ENCODE measurements at regions of chr9 and their contacts with region 1.

Region 1: DNA sequence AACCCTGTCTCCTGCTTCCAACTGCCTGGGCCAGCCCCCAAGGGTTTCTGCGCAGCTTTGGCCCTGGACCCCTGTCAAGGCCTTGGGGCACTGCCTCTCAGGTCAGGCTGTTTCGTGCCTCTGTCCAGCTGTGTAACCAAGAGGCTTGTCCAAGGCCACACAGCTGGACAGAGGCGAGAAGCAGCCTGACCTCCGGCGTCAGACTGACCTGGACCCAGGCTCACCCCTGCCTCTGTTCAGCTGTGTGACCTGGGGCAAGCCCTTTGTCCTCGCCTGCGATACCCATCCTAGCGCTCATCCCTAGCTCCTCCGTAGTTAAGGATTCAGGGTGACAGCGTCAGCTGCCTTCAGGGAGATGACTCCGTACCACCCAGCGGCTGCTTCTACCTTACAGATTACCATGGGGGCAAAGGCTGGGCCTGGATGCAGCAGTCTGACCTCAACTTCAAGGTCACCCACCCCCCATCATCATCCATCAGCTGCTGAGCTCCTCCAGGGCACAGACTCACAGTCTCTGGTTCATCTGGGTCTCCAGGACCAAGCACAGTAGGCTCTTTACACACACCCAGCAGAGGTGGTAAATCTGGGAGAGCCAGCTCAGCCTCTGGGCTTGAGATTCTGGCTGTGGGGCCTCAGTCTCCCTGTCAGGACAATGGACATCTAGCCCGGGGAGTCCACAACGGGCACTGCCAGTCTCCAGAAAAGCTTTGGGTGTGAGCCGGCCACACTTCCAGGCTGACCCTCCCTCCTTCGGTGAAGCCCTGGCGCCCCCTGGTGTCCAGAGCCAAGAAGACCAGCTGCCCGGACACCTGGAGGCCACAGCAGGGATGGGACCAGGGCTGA is 7.9 kb downstream of the AK1 start:
- DNase-seq: peak; percentile 88
- ATAC-seq: peak; percentile 86
- H3K4me3 Mint-ChIP-seq: no peak overlapping the region
- H3K27ac Mint-ChIP-seq: no peak overlapping the region
- H3K4me1 Mint-ChIP-seq: peaks cover 15% of the 10 kb centered on the region
- H3K27me3 Mint-ChIP-seq: no peaks in the 10 kb centered on the region

Region 2: GRCh38 chr9:127568971-127569885 is 300.3 kb before region 1 on chr9:
- CTCF ChIA-PET with region 1: no interaction called
- DNase-seq: peak; percentile 88
- ATAC-seq: peak; percentile 85
- H3K4me3 Mint-ChIP-seq: peak overlapping the region; percentile 75
- H3K27ac Mint-ChIP-seq: peak overlapping the region; percentile 95
- H3K4me1 Mint-ChIP-seq: peaks cover 58% of the 10 kb centered on the region
- H3K27me3 Mint-ChIP-seq: no peaks in the 10 kb centered on the region

Region 3: GRCh38 chr9:127763918-127764384 is 105.6 kb before region 1 on chr9:
- CTCF ChIA-PET with region 1: interaction called, 20 read pairs
- DNase-seq: no peak
- ATAC-seq: peak; percentile 45
- H3K4me3 Mint-ChIP-seq: no peak overlapping the region
- H3K27ac Mint-ChIP-seq: peak overlapping the region; percentile 54
- H3K4me1 Mint-ChIP-seq: peaks cover 48% of the 10 kb centered on the region
- H3K27me3 Mint-ChIP-seq: no peaks in the 10 kb centered on the region

Region 4: DNA sequence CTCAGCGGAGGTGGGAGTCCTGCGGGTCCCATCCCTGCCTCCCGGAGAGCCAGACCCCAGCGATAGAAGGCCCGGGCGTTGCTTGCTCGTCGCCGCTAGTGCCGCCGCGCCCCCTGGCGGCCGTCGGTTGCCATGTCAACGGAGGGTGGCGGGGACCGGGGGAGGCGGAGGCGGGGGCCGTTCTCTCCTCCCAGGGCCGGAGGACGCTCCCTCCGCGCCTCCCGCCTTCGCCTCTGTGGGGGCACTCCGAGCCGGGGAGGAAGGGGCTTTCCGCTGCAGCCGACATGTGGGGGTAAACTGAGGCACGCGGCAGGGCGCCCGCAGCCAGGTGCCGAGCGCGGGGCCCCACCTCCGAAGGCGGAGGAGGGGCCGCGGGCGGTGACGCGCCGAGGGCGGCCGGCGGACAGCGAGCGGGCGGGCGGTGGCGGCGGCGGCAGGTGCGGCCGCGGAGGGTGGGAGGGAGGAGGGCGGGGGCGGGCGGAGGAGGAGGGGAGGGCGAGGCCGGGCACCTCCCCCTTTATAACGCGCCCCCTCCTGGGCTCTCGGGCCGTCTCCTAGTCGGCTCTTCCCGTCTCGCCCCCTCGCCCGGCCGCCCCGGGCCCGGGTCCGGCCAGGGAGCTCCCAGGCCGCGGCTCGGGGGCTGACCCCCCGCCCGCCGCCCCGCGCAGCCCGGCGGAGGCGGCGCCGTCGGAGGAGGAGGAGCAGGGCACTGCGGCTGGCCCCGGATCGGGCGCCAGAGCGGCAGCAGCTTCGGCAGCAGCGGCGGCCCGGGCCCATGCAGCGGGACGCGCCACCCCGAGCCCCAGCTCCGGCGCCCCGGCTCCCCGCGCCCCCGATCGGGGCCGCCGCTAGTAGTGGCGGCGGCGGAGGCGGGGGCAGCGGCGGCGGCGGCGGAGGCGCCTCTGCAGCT is 84.3 kb before region 1 on chr9:
- CTCF ChIA-PET with region 1: interaction called, 64 read pairs
- DNase-seq: peak; percentile 94
- ATAC-seq: peak; percentile 46
- H3K4me3 Mint-ChIP-seq: peak overlapping the region; percentile 95
- H3K27ac Mint-ChIP-seq: peak overlapping the region; percentile 89
- H3K4me1 Mint-ChIP-seq: peaks cover 78% of the 10 kb centered on the region
- H3K27me3 Mint-ChIP-seq: no peaks in the 10 kb centered on the region

Region 5: GRCh38 chr9:127817881-127818434 is 51.6 kb before region 1 on chr9:
- CTCF ChIA-PET with region 1: interaction called, 17 read pairs
- DNase-seq: no peak
- ATAC-seq: no peak
- H3K4me3 Mint-ChIP-seq: no peak overlapping the region
- H3K27ac Mint-ChIP-seq: no peak overlapping the region
- H3K4me1 Mint-ChIP-seq: no peaks in the 10 kb centered on the region
- H3K27me3 Mint-ChIP-seq: no peaks in the 10 kb centered on the region

Region 6: GRCh38 chr9:127910613-127911205 is 41.2 kb after region 1 on chr9:
- CTCF ChIA-PET with region 1: interaction called, 20 read pairs
- DNase-seq: peak; percentile 40
- ATAC-seq: no peak
- H3K4me3 Mint-ChIP-seq: peak overlapping the region; percentile 55
- H3K27ac Mint-ChIP-seq: peak overlapping the region; percentile 98
- H3K4me1 Mint-ChIP-seq: peaks cover 72% of the 10 kb centered on the region
- H3K27me3 Mint-ChIP-seq: no peaks in the 10 kb centered on the region

Region 7: GRCh38 chr9:128020692-128021091 is 151.2 kb after region 1 on chr9:
- CTCF ChIA-PET with region 1: no interaction called
- DNase-seq: no peak
- ATAC-seq: no peak
- H3K4me3 Mint-ChIP-seq: no peak overlapping the region
- H3K27ac Mint-ChIP-seq: no peak overlapping the region
- H3K4me1 Mint-ChIP-seq: peaks cover 47% of the 10 kb centered on the region
- H3K27me3 Mint-ChIP-seq: peaks cover 6% of the 10 kb centered on the region

Measured in activated CD8-positive, alpha-beta memory T cell treated with anti-CD3 and anti-CD28 coated beads, Interleukin-2, amount 10 ng/mL, durations not matched to agents 7 days and 5 days (primary cell).